Activated B cell treated with CpG ODN at 0.5 μM for 24 hours (primary cell): ENCODE measurements at regions of chr20 and their contacts with region 1.

Region 1: DNA sequence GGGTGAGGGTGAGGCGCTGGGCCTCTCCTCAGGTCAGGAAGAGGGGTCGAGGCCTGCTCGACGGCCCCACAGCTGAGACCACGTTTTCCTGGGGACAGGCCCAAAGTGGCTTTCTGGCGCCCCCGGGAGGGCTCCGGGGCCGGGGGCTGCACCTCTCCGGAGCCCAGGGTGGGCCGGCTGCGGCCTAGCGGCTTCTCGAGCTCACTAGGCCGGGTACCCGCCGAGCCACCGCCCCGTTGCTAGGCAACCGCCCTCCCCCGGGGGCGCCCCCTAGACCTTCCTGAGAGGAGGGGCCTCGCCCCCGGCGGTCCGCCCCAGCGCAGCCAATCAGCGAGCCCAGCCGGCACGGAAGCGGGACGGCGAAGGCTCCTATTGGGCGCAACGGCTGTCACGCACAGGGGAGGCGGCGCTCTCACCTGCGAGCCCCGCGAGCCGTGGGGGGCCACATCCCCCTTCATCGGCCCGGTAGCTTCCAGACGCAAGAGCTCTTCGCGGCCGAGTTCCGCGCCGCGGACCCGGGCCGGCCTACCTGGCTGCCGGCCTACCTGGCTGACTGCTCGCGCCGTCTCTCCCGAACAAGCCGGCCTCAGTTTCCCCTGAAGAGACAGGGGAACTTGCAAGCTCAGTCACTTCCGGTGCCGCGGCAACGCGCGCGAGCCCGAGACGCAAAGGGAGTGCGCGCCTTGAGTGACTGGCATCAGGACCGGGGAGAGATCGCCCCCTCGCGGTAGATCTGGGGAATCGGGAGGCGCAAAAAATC is 831 bp upstream of the BCL2L1 start:
- DNase-seq: peak; percentile 99
- ATAC-seq: peak; percentile 95
- H3K4me3 Mint-ChIP-seq: peak overlapping the region; percentile 95
- H3K27ac Mint-ChIP-seq: peak overlapping the region; percentile 96
- H3K4me1 Mint-ChIP-seq: peaks cover 43% of the 10 kb centered on the region
- H3K27me3 Mint-ChIP-seq: no peaks in the 10 kb centered on the region
- CTCF ChIP-seq: peak; percentile 61

Region 2: DNA sequence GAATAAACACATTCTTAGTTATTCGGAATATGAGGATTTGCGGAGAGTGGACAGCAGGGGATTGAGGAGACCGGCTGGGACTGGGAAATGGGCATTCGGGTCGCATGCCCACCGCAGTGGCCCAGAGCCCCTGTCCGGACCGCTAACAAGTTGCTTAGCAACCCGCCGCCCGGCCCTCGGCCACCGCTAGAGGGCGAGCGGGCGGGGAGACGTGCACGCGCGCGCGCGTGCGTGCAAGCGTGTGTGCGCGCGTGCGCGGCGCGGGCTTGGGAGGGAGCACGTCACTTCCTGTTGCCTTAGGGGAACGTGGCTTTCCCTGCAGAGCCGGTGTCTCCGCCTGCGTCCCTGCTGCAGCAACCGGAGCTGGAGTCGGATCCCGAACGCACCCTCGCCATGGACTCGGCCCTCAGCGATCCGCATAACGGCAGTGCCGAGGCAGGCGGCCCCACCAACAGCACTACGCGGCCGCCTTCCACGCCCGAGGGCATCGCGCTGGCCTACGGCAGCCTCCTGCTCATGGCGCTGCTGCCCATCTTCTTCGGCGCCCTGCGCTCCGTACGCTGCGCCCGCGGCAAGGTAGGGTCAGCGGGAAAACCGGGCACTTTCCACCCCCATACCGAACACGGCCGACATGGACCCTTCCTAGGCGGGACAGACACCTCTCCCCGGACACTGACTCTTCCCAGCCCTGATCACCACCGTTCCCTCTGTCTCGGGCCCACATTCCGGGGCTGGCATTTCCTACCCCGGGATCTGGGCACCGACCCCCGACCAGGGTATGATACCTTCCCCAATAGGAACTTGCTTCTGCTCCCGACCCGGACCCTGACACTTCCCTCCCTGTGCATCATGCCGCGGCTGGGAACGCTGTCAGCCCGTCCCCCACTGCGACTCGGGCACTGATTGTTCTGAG is 209.1 kb before region 1 on chr20 and contains the start of gene HM13:
- CTCF ChIA-PET with region 1: no interaction called
- POLR2A ChIA-PET with region 1: no interaction called
- intact Hi-C with region 1: loop called (anchors 1 kb)
- DNase-seq: peak; percentile 80
- ATAC-seq: peak; percentile 87
- H3K4me3 Mint-ChIP-seq: no peak within 1 kb of the TSS
- H3K27ac Mint-ChIP-seq: peak within 1 kb of the TSS; percentile 43
- H3K4me1 Mint-ChIP-seq: peaks cover 7% of the 10 kb centered on the region
- H3K27me3 Mint-ChIP-seq: no peaks in the 10 kb centered on the region
- CTCF ChIP-seq: peak; percentile 70
- total RNA-seq, gene HM13: 77.5 and 90.9 TPM in 2 replicates

Region 3: GRCh38 chr20:31605031-31605901 is 118.2 kb before region 1 on chr20 and contains the start of gene ID1:
- CTCF ChIA-PET with region 1: no interaction called
- POLR2A ChIA-PET with region 1: interaction called, 3 read pairs
- intact Hi-C with region 1: loop called (anchors 2 kb)
- DNase-seq: peak; percentile 81
- ATAC-seq: peak; percentile 91
- H3K4me3 Mint-ChIP-seq: peak within 1 kb of the TSS; percentile 97
- H3K27ac Mint-ChIP-seq: peak within 1 kb of the TSS; percentile 18
- H3K4me1 Mint-ChIP-seq: peaks cover 30% of the 10 kb centered on the region
- H3K27me3 Mint-ChIP-seq: peaks cover 42% of the 10 kb centered on the region
- CTCF ChIP-seq: no peak
- total RNA-seq, gene ID1: 0.20 and 0.60 TPM in 2 replicates

Region 4: DNA sequence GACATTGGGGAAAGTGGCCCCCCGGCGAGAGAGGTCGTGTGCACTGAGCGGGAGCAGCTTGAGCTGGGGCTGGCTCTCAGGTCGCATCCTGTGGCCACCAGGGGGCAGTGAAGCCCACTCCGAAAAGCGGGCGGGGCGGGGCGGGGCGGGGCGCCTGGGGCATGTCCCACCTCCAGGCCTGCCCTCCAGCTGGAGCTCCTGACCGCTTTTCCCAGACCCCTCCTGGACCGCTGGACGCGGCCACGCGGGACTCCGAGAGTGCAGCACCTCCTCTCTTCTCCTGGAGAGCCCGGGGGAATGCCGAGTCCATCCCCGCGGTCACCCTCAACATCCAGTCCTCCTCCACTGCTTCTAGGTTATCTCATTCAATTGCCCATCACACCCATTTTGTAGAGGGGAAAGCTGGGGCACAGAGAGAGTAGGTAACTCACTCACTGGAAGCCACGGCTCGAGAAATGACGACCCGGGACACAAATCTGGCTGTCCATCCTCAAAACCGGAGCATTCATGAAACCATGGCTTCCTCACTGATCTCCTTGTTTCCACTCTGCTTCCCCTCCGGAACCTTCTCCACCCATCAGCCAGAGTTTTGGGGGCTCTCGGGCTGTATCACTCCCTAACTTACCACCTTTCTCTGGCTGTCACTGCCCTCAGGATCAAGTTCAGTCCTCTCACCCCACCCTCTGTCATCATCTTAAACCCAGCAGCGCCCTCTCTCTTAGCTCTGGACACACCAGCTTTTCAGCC is 61.7 kb before region 1 on chr20:
- CTCF ChIA-PET with region 1: interaction called, 239 read pairs
- POLR2A ChIA-PET with region 1: interaction called, 132 read pairs
- intact Hi-C with region 1: loop called (anchors 1 kb)
- DNase-seq: peak; percentile 69
- ATAC-seq: peak; percentile 89
- H3K4me3 Mint-ChIP-seq: peak overlapping the region; percentile 76
- H3K27ac Mint-ChIP-seq: peak overlapping the region; percentile 75
- H3K4me1 Mint-ChIP-seq: peaks cover 30% of the 10 kb centered on the region
- H3K27me3 Mint-ChIP-seq: no peaks in the 10 kb centered on the region
- CTCF ChIP-seq: no peak

Region 5: DNA sequence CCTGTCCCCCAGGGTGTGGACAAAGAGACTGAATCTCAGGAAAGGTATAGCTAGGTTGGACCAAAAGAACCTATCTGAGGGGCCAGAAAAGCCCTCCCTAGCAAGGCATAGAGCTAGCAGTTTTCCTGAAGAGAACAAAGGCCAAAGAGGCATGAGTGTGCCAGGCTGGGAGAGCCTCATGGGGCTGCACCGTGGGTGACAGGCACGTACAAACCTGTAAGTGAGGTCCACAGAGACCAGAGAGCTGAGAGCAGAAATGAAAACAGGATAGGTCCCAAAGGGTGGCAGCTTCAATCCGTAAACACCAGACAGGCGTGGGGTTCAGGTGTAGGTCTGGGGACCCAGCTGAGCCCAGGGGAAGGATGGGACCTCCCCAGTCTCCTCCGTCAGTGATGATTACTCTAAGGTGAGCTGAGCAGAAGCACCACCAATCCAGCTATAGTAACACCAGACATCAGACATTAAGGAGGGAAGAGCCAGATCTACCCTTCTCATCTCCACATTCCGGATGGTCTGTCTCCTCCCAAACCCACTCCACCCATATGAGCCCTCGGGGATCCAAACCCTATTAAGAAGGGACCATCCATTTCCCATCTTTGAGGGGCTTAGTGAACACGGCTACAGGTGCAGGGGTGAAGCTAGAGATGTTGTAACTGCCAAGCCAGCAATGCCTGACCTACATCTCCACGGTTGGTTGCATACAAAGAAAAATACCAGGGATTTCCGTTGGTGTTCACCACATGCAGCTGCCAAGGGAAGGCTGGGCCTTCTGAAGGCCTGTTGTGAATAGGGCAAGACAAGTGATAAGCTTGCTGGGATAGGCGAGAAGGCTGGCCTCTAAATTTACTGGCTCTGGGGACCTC is 39.1 kb before region 1 on chr20:
- CTCF ChIA-PET with region 1: interaction called, 34 read pairs
- POLR2A ChIA-PET with region 1: interaction called, 51 read pairs
- intact Hi-C with region 1: loop called (anchors 1 kb)
- DNase-seq: no peak
- ATAC-seq: peak; percentile 79
- H3K4me3 Mint-ChIP-seq: peak overlapping the region; percentile 68
- H3K27ac Mint-ChIP-seq: peak overlapping the region; percentile 83
- H3K4me1 Mint-ChIP-seq: peaks cover 59% of the 10 kb centered on the region
- H3K27me3 Mint-ChIP-seq: no peaks in the 10 kb centered on the region
- CTCF ChIP-seq: no peak

Region 6: GRCh38 chr20:31707994-31708735 is 15.3 kb before region 1 on chr20:
- CTCF ChIA-PET with region 1: interaction called, 9 read pairs
- POLR2A ChIA-PET with region 1: interaction called, 8 read pairs
- intact Hi-C with region 1: loop called (anchors 2 kb)
- DNase-seq: no peak
- ATAC-seq: no peak
- H3K4me3 Mint-ChIP-seq: no peak overlapping the region
- H3K27ac Mint-ChIP-seq: no peak overlapping the region
- H3K4me1 Mint-ChIP-seq: peaks cover 64% of the 10 kb centered on the region
- H3K27me3 Mint-ChIP-seq: no peaks in the 10 kb centered on the region
- CTCF ChIP-seq: no peak

Region 7: GRCh38 chr20:31760519-31761240 is 37.2 kb after region 1 on chr20:
- CTCF ChIA-PET with region 1: no interaction called
- POLR2A ChIA-PET with region 1: no interaction called
- intact Hi-C with region 1: no loop called
- DNase-seq: no peak
- ATAC-seq: no peak
- H3K4me3 Mint-ChIP-seq: no peak overlapping the region
- H3K27ac Mint-ChIP-seq: no peak overlapping the region
- H3K4me1 Mint-ChIP-seq: no peaks in the 10 kb centered on the region
- H3K27me3 Mint-ChIP-seq: no peaks in the 10 kb centered on the region
- CTCF ChIP-seq: no peak

Region 8: GRCh38 chr20:31774408-31774807 is 50.9 kb after region 1 on chr20:
- CTCF ChIA-PET with region 1: no interaction called
- POLR2A ChIA-PET with region 1: no interaction called
- intact Hi-C with region 1: no loop called
- DNase-seq: no peak
- ATAC-seq: no peak
- H3K4me3 Mint-ChIP-seq: no peak overlapping the region
- H3K27ac Mint-ChIP-seq: no peak overlapping the region
- H3K4me1 Mint-ChIP-seq: no peaks in the 10 kb centered on the region
- H3K27me3 Mint-ChIP-seq: no peaks in the 10 kb centered on the region
- CTCF ChIP-seq: no peak

Region 9: DNA sequence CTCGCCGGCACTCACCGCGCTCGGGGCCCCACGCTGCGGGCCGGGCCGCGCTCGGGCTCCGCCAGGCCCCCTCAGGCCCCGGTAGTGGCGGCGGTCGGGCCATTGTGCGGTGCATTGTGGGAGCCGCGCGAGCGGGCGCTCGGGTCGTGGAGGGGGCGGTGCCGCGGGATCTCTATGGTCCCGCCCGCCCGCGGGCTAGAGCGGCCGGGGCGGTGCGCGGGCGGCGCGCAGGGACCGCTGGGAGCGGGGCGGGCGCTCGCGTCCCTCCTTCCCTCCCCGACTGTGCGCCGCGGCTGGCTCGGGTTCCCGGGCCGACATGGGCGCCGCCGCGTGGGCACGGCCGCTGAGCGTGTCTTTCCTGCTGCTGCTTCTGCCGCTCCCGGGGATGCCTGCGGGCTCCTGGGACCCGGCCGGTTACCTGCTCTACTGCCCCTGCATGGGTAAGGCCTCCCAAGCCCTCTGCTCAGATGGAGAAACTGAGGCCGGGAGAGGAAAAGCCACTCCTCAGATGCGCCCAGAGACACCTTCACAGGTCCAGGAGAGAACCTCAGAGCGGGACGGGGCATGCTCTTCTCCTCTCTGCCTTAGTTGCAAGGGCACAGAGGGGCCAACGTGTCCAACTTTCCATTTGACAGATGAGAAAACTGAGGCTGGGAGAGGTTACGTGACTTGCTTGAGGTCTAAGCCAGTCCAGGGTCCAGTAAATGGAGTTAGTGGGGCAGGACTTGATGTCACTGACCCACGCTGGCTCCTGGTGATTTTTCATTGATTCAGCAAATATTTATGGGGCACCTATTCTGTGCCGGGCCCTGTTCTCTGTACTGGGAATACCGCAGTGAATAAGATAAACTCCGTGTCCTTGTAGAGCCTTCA is 484.4 kb after region 1 on chr20 and contains the starts of genes PLAGL2 and POFUT1:
- CTCF ChIA-PET with region 1: no interaction called
- POLR2A ChIA-PET with region 1: no interaction called
- intact Hi-C with region 1: loop called (anchors 1 kb)
- DNase-seq: peak; percentile 92
- ATAC-seq: peak; percentile 97
- H3K4me3 Mint-ChIP-seq: peak within 1 kb of the TSS; percentile 91
- H3K27ac Mint-ChIP-seq: peak within 1 kb of the TSS; percentile 85
- H3K4me1 Mint-ChIP-seq: peaks cover 62% of the 10 kb centered on the region
- H3K27me3 Mint-ChIP-seq: no peaks in the 10 kb centered on the region
- CTCF ChIP-seq: no peak
- total RNA-seq, gene PLAGL2: 17.3 and 17.9 TPM in 2 replicates
- total RNA-seq, gene POFUT1: 20.4 and 24.0 TPM in 2 replicates

Region 10: GRCh38 chr20:33465481-33466302 is 1742.2 kb after region 1 on chr20:
- CTCF ChIA-PET with region 1: no interaction called
- POLR2A ChIA-PET with region 1: no interaction called
- intact Hi-C with region 1: no loop called
- DNase-seq: no peak
- ATAC-seq: peak; percentile 37
- H3K4me3 Mint-ChIP-seq: peak overlapping the region; percentile 35
- H3K27ac Mint-ChIP-seq: peak overlapping the region; percentile 73
- H3K4me1 Mint-ChIP-seq: peaks cover 25% of the 10 kb centered on the region
- H3K27me3 Mint-ChIP-seq: no peaks in the 10 kb centered on the region
- CTCF ChIP-seq: no peak